ENCODE measurements at regions of chr5 and their contacts with region 1.

Region 1: GRCh38 chr5:33440482-33441240 is at the start of gene TARS1:
- DNase-seq: peak; percentile 96
- H3K4me3 Mint-ChIP-seq: no peak within 1 kb of the TSS
- H3K27ac Mint-ChIP-seq: no peak within 1 kb of the TSS
- H3K4me1 Mint-ChIP-seq: peaks cover 27% of the 10 kb centered on the region
- H3K27me3 Mint-ChIP-seq: no peaks in the 10 kb centered on the region
- CTCF ChIP-seq: no peak
- total RNA-seq, gene TARS1: 168 and 201 TPM in 2 replicates

Region 2: GRCh38 chr5:32572778-32573480 is 867.7 kb before region 1 on chr5:
- CTCF ChIA-PET with region 1: no interaction called
- intact Hi-C with region 1: no loop called
- DNase-seq: no peak
- H3K4me3 Mint-ChIP-seq: no peak overlapping the region
- H3K27ac Mint-ChIP-seq: no peak overlapping the region
- H3K4me1 Mint-ChIP-seq: no peaks in the 10 kb centered on the region
- H3K27me3 Mint-ChIP-seq: no peaks in the 10 kb centered on the region
- CTCF ChIP-seq: no peak

Region 3: DNA sequence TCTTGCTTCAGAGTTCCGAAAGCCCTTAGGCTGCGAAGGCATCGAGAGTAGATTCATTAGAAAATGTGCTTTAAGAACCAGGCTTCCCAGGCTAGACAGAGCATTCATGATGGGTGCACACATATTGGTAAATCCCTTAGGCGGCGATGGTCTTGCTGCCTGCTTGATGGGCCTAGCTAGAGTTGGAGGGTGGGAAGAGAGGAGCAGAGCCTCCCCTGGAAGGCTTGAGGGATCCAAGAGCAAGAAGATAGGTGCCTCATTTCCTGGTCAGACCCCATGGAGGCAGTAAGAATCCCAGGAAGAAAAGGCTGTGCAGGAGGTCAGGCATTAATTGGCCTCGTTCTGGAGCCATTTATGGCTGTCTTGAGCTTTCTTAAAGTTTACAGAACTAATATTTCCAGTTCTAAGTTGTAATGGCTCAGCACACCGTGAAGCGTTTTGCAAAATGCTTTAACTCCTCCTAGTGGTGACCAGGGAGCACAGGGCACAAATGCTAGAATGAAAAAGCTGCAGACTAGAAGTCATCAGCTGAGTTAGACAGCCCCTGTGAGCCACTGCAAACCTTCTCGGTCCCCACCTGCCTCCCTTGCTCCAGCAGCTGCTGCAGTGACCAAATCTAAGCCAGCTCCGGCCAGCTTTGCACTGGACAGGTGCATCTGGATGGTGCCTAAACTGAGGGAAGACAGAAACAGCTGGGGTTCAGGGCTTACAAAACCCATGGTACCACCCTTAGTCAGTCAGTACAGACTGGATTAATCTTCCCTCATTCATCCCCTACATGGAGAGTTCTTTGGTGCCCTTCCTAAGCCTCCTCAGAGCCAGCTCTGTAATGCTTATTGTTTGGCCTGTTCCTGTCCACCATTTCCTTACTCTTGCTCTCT is 529.2 kb after region 1 on chr5:
- CTCF ChIA-PET with region 1: interaction called, 18 read pairs
- intact Hi-C with region 1: loop called (anchors 1 kb)
- DNase-seq: peak; percentile 34
- H3K4me3 Mint-ChIP-seq: no peak overlapping the region
- H3K27ac Mint-ChIP-seq: no peak overlapping the region
- H3K4me1 Mint-ChIP-seq: no peaks in the 10 kb centered on the region
- H3K27me3 Mint-ChIP-seq: peaks cover 8% of the 10 kb centered on the region
- CTCF ChIP-seq: peak; percentile 69

Region 4: GRCh38 chr5:34459908-34460307 is 1019.2 kb after region 1 on chr5:
- CTCF ChIA-PET with region 1: no interaction called
- intact Hi-C with region 1: loop called (anchors 10 kb)
- DNase-seq: no peak
- H3K4me3 Mint-ChIP-seq: no peak overlapping the region
- H3K27ac Mint-ChIP-seq: no peak overlapping the region
- H3K4me1 Mint-ChIP-seq: peaks cover 6% of the 10 kb centered on the region
- H3K27me3 Mint-ChIP-seq: no peaks in the 10 kb centered on the region
- CTCF ChIP-seq: no peak

Measured in Calu3 (cell line).